Breast epithelium (tissue), 4 donors: ENCODE measurements at regions of chr7 and their contacts with region 1.

Region 1: DNA sequence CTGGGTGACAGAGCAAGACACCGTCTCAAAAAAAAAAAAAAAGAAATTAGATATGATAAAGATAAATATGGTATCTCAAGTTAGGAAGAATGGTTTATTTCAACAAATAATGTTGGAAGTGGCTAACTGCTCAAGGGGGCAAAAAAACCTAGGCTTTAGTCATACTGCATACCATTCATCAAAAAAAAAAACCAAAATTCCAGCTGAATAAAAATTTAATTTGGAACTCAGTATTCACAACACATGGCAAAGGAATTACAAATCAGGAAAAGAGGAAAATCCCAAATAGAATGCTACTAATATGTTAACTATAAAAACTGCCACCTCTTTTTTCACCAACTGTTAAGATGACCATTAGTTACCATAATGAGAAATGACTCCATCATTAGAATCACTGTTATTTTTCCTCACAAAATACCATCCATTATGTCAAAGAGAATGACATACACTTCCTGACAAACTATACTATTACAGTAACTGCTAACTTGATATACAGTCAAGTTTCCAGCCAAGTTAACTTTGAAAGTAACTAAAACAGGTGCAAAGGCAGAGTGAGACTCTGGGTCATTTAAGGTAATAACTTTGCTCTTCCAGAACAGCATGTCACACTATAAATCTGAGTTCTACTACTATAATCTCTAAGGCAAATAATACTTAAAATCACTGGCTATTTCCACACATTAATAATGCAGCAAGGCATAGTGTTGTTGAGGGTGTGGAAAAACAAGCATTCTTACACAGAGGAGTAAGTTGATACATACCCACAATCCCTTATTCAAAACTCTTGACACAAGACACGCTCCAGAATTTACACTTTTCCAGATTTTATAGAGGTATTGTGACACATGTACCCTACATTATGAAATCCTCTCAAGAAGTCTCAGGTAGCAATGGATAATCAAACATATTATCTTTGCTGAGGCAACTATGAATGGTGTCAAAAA is 10.2 kb downstream of the KBTBD2 start:
- DNase-seq: no peak
- H3K4me3 ChIP-seq: no peak overlapping the region
- H3K27ac ChIP-seq: no peak overlapping the region
- H3K4me1 ChIP-seq: no peaks in the 10 kb centered on the region
- H3K27me3 ChIP-seq: no peaks in the 10 kb centered on the region
- CTCF ChIP-seq: no peak
- POLR2A ChIP-seq: no peak

Region 2: GRCh38 chr7:32301427-32301826 is 579.9 kb before region 1 on chr7:
- intact Hi-C with region 1: loop called (anchors 10 kb)
- DNase-seq: no peak
- H3K4me3 ChIP-seq: no peak overlapping the region
- H3K27ac ChIP-seq: no peak overlapping the region
- H3K4me1 ChIP-seq: no peaks in the 10 kb centered on the region
- H3K27me3 ChIP-seq: peaks cover 0 to 17% of the 10 kb centered on the region in 2 donors
- CTCF ChIP-seq: no peak
- POLR2A ChIP-seq: no peak